ENCODE measurements at regions of chr5 and their contacts with region 1.

Region 1: DNA sequence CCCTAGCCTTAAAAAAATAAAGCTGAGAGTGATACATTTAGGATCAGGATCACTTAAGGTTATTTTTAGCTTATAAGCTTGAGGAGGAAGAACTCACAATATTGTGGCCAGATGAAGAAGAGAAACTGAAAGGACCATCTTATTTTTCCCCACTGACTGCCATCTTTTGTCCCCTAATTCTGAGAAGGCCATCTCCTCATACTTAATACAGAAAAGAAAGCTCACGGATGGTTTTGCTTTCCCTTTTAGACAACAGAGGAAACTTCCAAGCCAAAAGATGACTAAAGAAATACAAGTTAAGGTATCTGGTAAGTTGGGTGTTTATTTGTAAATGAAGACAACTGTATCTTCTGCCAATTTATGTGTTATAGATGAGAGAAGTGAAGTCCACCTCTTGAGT is 36.4 kb downstream of the ERAP1 start:
- DNase-seq: peak in 1 of 14 experiments; percentile 37
- ATAC-seq: no peak
- H3K4me3 ChIP-seq: no peak overlapping the region
- H3K4me3 Mint-ChIP-seq: no peak overlapping the region
- H3K27ac ChIP-seq: no peak overlapping the region
- H3K27ac Mint-ChIP-seq: peak overlapping the region; percentile 81
- H3K4me1 ChIP-seq: no peaks in the 10 kb centered on the region
- H3K4me1 Mint-ChIP-seq: peaks cover 8% of the 10 kb centered on the region
- H3K27me3 ChIP-seq: no peaks in the 10 kb centered on the region
- H3K27me3 Mint-ChIP-seq: no peaks in the 10 kb centered on the region
- CTCF ChIP-seq: no peak

Region 2: DNA sequence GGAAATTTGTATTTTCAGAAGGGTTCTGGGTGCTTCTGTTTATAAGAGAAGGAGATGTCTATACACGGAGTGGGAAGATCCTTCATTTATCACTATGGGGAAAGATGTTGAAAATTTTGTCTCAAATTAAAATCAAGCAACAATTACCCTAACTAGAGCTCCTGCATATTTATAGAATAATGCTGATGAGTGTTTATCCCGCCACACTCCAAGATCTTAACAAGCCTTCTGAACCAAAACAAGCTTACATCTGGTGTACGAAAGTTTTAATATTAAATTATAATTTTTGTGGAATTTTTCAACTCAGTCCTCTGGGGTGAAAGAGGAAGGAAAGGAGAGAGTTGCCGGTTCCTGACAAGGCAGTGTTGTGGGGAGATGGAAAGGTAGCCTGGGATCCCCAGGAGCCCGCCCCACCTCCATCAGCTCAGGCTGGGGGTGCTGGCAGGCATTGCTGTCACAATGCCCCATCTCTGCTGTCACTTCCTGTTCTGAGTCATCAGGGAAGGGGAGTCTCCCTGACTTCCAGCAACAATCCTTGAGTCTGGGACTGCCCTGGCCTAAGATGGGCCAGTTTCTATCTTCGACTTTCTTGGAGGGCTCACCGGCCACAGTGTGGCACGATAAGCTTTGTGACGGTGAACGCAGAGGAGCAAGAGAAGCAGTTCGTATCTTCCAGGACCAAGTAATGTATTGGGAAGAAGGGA is 28.2 kb before region 1 on chr5:
- CTCF ChIA-PET with region 1: no interaction called
- POLR2A ChIA-PET with region 1: interaction called, 3 read pairs
- intact Hi-C with region 1: loop called in 1 of 2 experiments (anchors 1 kb)
- DNase-seq: peak in 2 of 14 experiments; percentile 29 to 36
- ATAC-seq: no peak
- H3K4me3 ChIP-seq: no peak overlapping the region
- H3K4me3 Mint-ChIP-seq: no peak overlapping the region
- H3K27ac ChIP-seq: no peak overlapping the region
- H3K27ac Mint-ChIP-seq: no peak overlapping the region
- H3K4me1 ChIP-seq: no peaks in the 10 kb centered on the region
- H3K4me1 Mint-ChIP-seq: no peaks in the 10 kb centered on the region
- H3K27me3 ChIP-seq: no peaks in the 10 kb centered on the region
- H3K27me3 Mint-ChIP-seq: no peaks in the 10 kb centered on the region
- CTCF ChIP-seq: no peak

Measured in CD4-positive, alpha-beta T cell (primary cell).